Breast epithelium (tissue), 4 donors: ENCODE measurements at regions of chr10 and their contacts with region 1.

Region 1: GRCh38 chr10:18976696-18977251 is 71.8 kb upstream of the MALRD1 start:
- DNase-seq: no peak
- H3K4me3 ChIP-seq: no peak overlapping the region
- H3K27ac ChIP-seq: no peak overlapping the region
- H3K4me1 ChIP-seq: no peaks in the 10 kb centered on the region
- H3K27me3 ChIP-seq: no peaks in the 10 kb centered on the region
- CTCF ChIP-seq: no peak
- POLR2A ChIP-seq: no peak

Region 2: DNA sequence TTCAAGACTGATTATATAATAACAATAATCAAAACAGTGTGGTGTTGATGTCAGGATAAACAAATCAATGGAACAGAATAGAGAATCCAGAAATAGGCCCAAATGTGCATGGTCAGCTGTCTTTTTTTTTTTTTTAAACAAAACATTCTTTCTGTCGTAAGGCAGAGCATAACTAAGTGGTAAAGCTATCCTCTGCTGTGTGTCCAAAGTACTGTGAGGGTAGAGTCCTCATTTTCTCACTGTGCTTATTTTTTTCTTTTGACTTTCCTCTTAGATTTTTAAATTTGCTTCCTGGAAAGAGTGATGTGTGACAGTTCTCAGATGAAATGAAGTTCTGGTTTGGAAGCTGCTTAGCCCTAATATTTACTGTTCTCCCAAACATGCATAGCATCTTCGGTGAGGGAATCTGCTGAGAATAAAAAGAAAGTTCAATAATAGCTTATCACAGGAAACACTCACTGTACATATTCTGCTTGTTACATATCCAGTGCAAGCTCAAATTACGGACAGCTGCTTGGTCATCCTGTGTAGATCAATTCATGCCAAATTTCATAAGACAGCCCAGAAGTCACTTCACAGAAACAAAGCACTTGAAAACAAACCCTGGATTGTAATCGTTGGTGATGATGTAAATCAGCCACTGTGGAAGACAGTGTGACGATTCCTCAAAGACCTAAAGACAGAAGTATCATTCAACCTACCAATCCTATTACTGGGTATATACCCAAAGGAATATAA is 1496.4 kb after region 1 on chr10:
- intact Hi-C with region 1: loop called (anchors 5 kb)
- DNase-seq: no peak
- H3K4me3 ChIP-seq: no peak overlapping the region
- H3K27ac ChIP-seq: no peak overlapping the region
- H3K4me1 ChIP-seq: no peaks in the 10 kb centered on the region
- H3K27me3 ChIP-seq: no peaks in the 10 kb centered on the region
- CTCF ChIP-seq: no peak
- POLR2A ChIP-seq: no peak